Lower leg skin (tissue), 4 donors: ENCODE measurements at regions of chr3 and their contacts with region 1.

Region 1: DNA sequence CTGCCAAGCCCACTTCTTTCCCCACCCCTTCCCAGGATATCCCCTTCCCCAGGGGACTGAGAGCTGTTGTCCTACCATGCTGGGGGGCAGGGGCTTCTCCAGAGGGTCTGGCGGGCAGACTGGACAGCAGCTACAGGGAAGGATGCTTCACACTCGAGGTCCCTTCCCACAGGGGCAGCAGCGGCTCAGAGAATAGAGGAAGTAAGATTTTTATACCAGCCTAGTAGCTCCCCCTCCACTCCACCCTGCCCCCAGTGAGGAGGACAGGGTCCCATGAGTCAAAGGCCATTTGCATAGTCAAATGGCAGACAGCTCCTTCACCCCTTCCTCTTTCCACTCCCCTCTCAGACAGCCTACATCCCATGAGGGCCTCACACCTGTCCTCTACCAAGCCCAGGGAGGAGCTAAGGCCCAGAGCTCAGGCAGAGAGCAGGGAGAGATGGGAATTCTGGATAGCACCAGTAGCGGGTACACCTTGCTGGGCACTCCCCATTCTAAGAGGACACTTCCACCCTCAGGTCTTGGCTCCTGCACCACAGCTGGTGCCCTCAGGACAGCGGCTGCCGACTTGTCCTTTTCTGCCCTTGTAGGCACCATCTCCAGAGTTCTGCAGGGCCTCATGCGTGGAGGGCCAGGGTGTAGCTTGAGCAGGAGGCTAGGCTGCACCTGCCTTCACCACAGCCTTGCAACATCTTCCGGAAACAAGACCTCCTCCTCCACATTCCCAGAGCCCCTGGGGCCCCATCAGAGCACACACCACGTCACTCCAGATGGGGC is at the start of gene TLR9:
- DNase-seq: no peak
- H3K4me3 ChIP-seq: no peak within 1 kb of the TSS
- CTCF ChIP-seq: no peak
- POLR2A ChIP-seq: no peak
- total RNA-seq, gene TLR9: 0.19 to 0.61 TPM in 2 of 4 donors, not detected in the others

Region 2: DNA sequence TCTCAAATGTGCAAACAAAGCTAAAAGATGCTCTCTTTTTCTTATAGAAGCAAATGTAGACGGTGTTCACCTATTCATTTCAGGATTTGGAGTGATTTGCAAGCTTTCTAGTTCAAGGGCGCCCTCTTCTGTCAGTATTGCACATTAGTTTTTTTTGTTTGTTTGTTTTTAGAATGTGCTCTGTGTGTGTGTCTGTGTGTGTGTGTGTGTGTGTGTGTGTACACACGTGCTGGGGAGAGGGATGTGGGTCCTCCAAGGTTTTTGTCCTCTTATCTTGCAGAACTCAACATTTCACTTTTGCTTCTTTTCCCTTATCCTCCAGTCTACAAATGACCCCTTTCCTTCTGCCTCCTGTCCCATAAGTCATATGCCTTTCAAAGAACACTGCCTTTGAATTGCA is 114.0 kb after region 1 on chr3:
- intact Hi-C with region 1: loop called (anchors 5 kb)
- DNase-seq: peak in 1 of 2 donors; percentile 42
- H3K4me3 ChIP-seq: no peak overlapping the region
- CTCF ChIP-seq: peak in 1 of 3 donors; percentile 69
- POLR2A ChIP-seq: no peak